ENCODE measurements at regions of chr10 and their contacts with region 1.

Region 1: GRCh38 chr10:11165591-11166543 is 148.2 kb downstream of the CELF2 start:
- DNase-seq: peak; percentile 78 to 91 (median 86)
- H3K4me3 ChIP-seq: peak overlapping the region; percentile 50 to 93
- H3K4me3 Mint-ChIP-seq: peak overlapping the region in 6 of 8 donors; percentile 98 to 100 (median 99)
- H3K27ac ChIP-seq: peak overlapping the region; percentile 96
- H3K27ac Mint-ChIP-seq: peak overlapping the region in 6 of 7 donors; percentile 97 to 99 (median 98)
- H3K4me1 ChIP-seq: peaks cover 65% of the 10 kb centered on the region
- H3K4me1 Mint-ChIP-seq: peaks cover 31 to 43% (median 35%) of the 10 kb centered on the region in 4 donors
- H3K27me3 ChIP-seq: no peaks in the 10 kb centered on the region
- H3K27me3 Mint-ChIP-seq: no peaks in the 10 kb centered on the region

Region 2: GRCh38 chr10:11113156-11113555 is 52.7 kb before region 1 on chr10:
- CTCF ChIA-PET with region 1: interaction called, 39 read pairs
- POLR2A ChIA-PET with region 1: interaction called, 88 read pairs
- intact Hi-C with region 1: loop called (anchors 1 kb)
- DNase-seq: peak; percentile 58 to 69 (median 67)
- H3K4me3 ChIP-seq: no peak overlapping the region
- H3K4me3 Mint-ChIP-seq: peak overlapping the region in 7 of 8 donors; percentile 22 to 77 (median 58)
- H3K27ac ChIP-seq: no peak overlapping the region
- H3K27ac Mint-ChIP-seq: peak overlapping the region; percentile 3 to 90 (median 79)
- H3K4me1 ChIP-seq: peaks cover 13% of the 10 kb centered on the region
- H3K4me1 Mint-ChIP-seq: peaks cover 18 to 33% (median 23%) of the 10 kb centered on the region in 4 donors
- H3K27me3 ChIP-seq: no peaks in the 10 kb centered on the region
- H3K27me3 Mint-ChIP-seq: no peaks in the 10 kb centered on the region

Region 3: DNA sequence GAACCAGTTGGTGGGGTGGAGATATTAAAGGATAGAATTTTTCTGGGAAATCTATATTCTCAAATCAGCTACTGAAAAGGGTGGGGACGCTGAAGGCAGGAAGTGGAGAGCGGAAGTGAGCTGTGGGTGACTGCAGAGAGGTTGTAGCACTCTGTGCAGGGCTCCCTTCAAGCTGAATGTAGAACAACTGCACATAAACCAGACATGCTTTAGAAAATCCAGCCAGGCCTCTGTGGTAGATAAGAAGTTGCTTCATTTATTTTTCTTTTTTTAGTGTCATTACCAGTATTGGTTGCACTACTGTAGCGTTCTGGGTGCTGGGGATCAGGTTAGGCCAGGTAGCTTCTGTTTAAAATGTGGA is 20.4 kb before region 1 on chr10:
- CTCF ChIA-PET with region 1: interaction called, 308 read pairs
- POLR2A ChIA-PET with region 1: interaction called, 1,422 read pairs
- intact Hi-C with region 1: loop called (anchors 1 kb)
- DNase-seq: peak; percentile 74 to 88 (median 79)
- H3K4me3 ChIP-seq: peak overlapping the region in 1 of 2 donors; percentile 41
- H3K4me3 Mint-ChIP-seq: peak overlapping the region; percentile 68 to 88 (median 78)
- H3K27ac ChIP-seq: peak overlapping the region; percentile 93
- H3K27ac Mint-ChIP-seq: peak overlapping the region; percentile 91 to 100 (median 99)
- H3K4me1 ChIP-seq: peaks cover 98% of the 10 kb centered on the region
- H3K4me1 Mint-ChIP-seq: peaks cover 81 to 98% (median 91%) of the 10 kb centered on the region in 4 donors
- H3K27me3 ChIP-seq: no peaks in the 10 kb centered on the region
- H3K27me3 Mint-ChIP-seq: no peaks in the 10 kb centered on the region

Region 4: DNA sequence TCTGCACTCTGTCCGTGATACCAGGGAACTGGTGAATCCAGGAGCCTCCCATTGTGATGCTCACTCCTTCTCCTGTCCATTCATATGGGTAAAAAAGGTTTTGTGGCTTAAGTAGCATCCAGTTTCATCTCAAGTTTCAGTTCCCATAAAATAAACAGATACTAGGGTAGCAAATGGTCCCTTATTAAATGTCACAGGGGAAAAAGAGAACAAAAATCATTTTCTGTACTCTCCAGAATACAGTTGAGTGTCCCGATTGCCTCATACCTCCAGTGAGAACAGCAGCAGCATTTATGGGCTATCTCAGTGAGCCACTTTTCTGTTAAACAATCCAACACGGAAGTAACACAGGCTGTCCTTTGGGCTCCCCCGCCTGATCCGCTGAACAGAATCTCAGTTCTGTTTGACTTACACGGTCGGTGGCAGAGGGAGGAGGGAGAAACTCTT is 31.4 kb after region 1 on chr10:
- CTCF ChIA-PET with region 1: interaction called, 3 read pairs
- POLR2A ChIA-PET with region 1: interaction called, 16 read pairs
- intact Hi-C with region 1: no loop called
- DNase-seq: no peak
- H3K4me3 ChIP-seq: no peak overlapping the region
- H3K4me3 Mint-ChIP-seq: peak overlapping the region in 7 of 8 donors; percentile 14 to 84 (median 49)
- H3K27ac ChIP-seq: peak overlapping the region; percentile 2
- H3K27ac Mint-ChIP-seq: peak overlapping the region; percentile 30 to 94 (median 75)
- H3K4me1 ChIP-seq: peaks cover 94% of the 10 kb centered on the region
- H3K4me1 Mint-ChIP-seq: peaks cover 82 to 98% (median 90%) of the 10 kb centered on the region in 4 donors
- H3K27me3 ChIP-seq: no peaks in the 10 kb centered on the region
- H3K27me3 Mint-ChIP-seq: no peaks in the 10 kb centered on the region

Region 5: DNA sequence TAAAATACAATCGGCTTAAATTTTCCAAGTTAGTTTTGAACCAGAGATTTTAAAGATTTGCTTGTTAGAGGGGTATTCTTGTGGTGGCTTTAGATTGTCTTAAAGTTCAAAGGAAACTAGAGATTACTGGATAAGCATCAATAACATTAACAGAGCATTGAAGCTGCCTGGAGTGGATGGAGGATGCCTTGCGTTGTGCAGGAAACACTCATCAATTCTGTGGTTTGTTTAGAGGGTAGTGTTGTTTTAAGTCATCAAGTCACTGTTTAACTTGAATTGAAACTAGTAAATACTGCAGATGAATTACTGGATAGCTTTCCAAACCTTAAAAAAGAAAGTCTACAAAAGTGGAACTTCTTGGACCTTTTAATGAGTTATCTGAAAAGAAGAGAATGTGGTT is 70.4 kb after region 1 on chr10:
- CTCF ChIA-PET with region 1: interaction called, 4 read pairs
- POLR2A ChIA-PET with region 1: interaction called, 119 read pairs
- intact Hi-C with region 1: no loop called
- DNase-seq: peak; percentile 58 to 78 (median 63)
- H3K4me3 ChIP-seq: no peak overlapping the region
- H3K4me3 Mint-ChIP-seq: peak overlapping the region; percentile 25 to 74 (median 65)
- H3K27ac ChIP-seq: peak overlapping the region; percentile 57
- H3K27ac Mint-ChIP-seq: peak overlapping the region; percentile 76 to 92 (median 90)
- H3K4me1 ChIP-seq: peaks cover 97% of the 10 kb centered on the region
- H3K4me1 Mint-ChIP-seq: peaks cover 68 to 81% (median 72%) of the 10 kb centered on the region in 4 donors
- H3K27me3 ChIP-seq: no peaks in the 10 kb centered on the region
- H3K27me3 Mint-ChIP-seq: no peaks in the 10 kb centered on the region

Region 6: GRCh38 chr10:11403116-11403515 is 237.2 kb after region 1 on chr10:
- CTCF ChIA-PET with region 1: no interaction called
- POLR2A ChIA-PET with region 1: interaction called, 6 read pairs
- intact Hi-C with region 1: loop called (anchors 10 kb)
- DNase-seq: peak; percentile 78 to 89 (median 84)
- H3K4me3 ChIP-seq: no peak overlapping the region
- H3K4me3 Mint-ChIP-seq: peak overlapping the region; percentile 68 to 88 (median 82)
- H3K27ac ChIP-seq: peak overlapping the region; percentile 34
- H3K27ac Mint-ChIP-seq: peak overlapping the region; percentile 77 to 100 (median 97)
- H3K4me1 ChIP-seq: peaks cover 65% of the 10 kb centered on the region
- H3K4me1 Mint-ChIP-seq: peaks cover 57 to 88% (median 73%) of the 10 kb centered on the region in 4 donors
- H3K27me3 ChIP-seq: no peaks in the 10 kb centered on the region
- H3K27me3 Mint-ChIP-seq: no peaks in the 10 kb centered on the region

Region 7: DNA sequence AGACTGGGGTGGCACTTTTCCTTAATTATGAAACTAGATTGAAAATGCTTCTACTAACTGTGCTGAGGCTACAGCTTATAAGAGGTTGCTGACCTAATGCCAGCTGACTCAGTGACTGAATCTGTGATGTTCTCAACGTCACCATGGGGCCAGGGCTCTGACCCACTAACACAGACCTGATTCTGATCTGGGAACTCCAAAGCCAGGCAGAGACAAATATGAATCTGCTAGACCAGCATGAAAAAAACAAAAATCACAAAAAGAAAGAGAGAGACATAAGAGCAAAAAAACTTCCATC is 429.5 kb after region 1 on chr10:
- CTCF ChIA-PET with region 1: no interaction called
- POLR2A ChIA-PET with region 1: no interaction called
- intact Hi-C with region 1: no loop called
- DNase-seq: no peak
- H3K4me3 ChIP-seq: no peak overlapping the region
- H3K4me3 Mint-ChIP-seq: no peak overlapping the region
- H3K27ac ChIP-seq: no peak overlapping the region
- H3K27ac Mint-ChIP-seq: no peak overlapping the region
- H3K4me1 ChIP-seq: no peaks in the 10 kb centered on the region
- H3K4me1 Mint-ChIP-seq: peaks cover 0 to 2% (median 0%) of the 10 kb centered on the region in 4 donors
- H3K27me3 ChIP-seq: no peaks in the 10 kb centered on the region
- H3K27me3 Mint-ChIP-seq: peaks cover 0 to 1% of the 10 kb centered on the region in 2 donors

Measured in CD4-positive, alpha-beta memory T cell (primary cell).